GM18951 (cell line): ENCODE measurements at regions of chr1 and their contacts with region 1.

Region 1: DNA sequence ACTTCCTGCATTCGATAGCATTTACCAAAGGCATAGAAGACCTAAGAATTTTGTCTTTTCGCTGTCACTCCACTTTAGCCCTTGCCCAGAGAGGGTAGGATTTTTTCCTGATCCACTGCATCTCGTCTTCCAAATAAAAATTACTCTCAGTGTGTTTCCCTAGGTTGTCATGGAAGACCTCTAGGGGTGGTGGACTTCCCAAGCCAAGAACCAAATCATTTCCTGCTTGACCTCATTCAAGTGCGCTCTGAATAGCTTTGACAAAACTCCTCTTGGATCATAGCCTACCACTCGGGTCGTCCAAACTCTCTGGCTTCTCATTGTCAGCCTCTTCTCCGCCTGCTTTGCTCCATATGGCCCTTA is 431 bp upstream of the C1orf52 start:
- POLR2A ChIP-seq: no peak

Region 2: DNA sequence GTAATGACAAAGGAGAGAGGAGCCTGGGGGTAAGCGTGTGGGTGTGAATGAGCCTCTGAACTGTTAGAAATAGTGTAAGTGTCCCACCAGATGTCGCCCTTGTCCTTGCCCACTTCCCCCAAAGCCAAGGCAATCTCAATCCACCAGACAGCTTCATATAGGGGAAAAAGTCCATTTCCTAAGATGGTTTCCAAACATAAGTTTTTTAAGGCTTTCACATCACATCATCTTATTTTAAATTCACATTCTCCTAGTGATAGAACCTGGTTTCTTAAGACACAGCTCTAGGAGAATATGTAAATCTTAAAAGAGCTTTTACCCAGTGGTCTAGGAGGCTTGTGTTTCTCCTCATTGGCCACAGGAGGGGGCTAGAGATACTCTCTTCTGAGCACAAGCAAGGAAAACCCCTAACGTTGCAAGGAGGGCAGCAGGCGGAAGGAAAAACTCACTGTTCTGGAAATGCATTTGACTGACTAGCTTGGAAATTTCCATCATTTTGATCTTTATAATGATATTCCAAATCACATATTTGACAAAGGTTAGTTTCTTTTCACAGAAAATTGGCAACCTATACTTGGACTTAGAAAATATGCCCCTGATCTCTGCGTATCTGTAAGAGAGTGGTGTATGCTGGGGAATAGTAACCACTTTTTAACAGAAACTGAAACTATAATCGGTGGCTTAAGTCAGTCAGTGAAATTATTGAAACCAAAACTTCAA is 315.0 kb before region 1 on chr1:
- in situ Hi-C with region 1: loop called (anchors 10 kb)
- POLR2A ChIP-seq: no peak